Dorsolateral prefrontal cortex (tissue), 120 donors: ENCODE measurements at regions of chr17 and their contacts with region 1.

Region 1: GRCh38 chr17:15260376-15261257 is 4.5 kb downstream of the PMP22 start:
- DNase-seq: peak; percentile 66 to 90 (median 79)
- H3K4me3 ChIP-seq: peak overlapping the region; percentile 49 to 86 (median 75)
- H3K27ac ChIP-seq: peak overlapping the region; percentile 87 to 99 (median 96)
- H3K27me3 ChIP-seq: peaks cover 0 to 7% (median 0%) of the 10 kb centered on the region in 45 donors
- CTCF ChIP-seq: peak; percentile 35 to 97 (median 78)

Region 2: GRCh38 chr17:15143524-15143923 is 117.1 kb before region 1 on chr17:
- intact Hi-C with region 1: no loop called
- DNase-seq: no peak
- H3K4me3 ChIP-seq: no peak overlapping the region
- H3K27ac ChIP-seq: no peak overlapping the region
- H3K27me3 ChIP-seq: peaks cover 0 to 5% (median 0%) of the 10 kb centered on the region in 45 donors
- CTCF ChIP-seq: no peak

Region 3: DNA sequence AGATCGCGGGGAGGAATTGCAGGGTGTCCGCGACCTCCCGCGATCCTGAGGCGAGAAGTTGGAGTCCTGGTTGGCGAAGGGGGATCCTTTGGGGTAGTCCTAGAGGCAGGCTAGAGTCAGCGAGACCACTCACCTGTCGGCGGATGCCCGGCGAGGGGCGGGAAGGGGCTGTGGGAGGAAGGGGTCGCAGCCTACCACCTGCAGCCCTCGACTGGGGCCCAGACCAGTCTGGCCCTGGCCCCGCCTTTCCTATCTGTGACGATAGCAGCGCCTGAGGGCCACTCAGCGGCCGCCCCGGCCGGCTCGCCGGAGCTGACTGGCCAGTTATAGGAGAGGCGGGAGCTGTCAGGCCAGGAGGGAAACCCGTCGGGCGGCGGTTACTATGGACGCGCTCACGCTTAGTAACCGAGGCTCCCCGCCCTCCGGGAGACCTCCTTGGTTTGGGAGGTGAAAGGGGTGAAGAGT is 80.8 kb after region 1 on chr17 and contains the start of gene TEKT3:
- intact Hi-C with region 1: loop called in 1 of 2 experiments (anchors 5 kb)
- DNase-seq: peak; percentile 45 to 89 (median 77)
- H3K4me3 ChIP-seq: peak within 1 kb of the TSS; percentile 33 to 81 (median 62)
- H3K27ac ChIP-seq: peak within 1 kb of the TSS in 2 of 59 donors; percentile 15 to 58
- H3K27me3 ChIP-seq: peaks cover 0 to 23% (median 0%) of the 10 kb centered on the region in 45 donors
- CTCF ChIP-seq: peak in 3 of 56 donors; percentile 11 to 18 (median 14)
- total RNA-seq, gene TEKT3: 0.44 to 7.4 (median 2.7) TPM in 116 of 120 experiments, not detected in the others

Region 4: DNA sequence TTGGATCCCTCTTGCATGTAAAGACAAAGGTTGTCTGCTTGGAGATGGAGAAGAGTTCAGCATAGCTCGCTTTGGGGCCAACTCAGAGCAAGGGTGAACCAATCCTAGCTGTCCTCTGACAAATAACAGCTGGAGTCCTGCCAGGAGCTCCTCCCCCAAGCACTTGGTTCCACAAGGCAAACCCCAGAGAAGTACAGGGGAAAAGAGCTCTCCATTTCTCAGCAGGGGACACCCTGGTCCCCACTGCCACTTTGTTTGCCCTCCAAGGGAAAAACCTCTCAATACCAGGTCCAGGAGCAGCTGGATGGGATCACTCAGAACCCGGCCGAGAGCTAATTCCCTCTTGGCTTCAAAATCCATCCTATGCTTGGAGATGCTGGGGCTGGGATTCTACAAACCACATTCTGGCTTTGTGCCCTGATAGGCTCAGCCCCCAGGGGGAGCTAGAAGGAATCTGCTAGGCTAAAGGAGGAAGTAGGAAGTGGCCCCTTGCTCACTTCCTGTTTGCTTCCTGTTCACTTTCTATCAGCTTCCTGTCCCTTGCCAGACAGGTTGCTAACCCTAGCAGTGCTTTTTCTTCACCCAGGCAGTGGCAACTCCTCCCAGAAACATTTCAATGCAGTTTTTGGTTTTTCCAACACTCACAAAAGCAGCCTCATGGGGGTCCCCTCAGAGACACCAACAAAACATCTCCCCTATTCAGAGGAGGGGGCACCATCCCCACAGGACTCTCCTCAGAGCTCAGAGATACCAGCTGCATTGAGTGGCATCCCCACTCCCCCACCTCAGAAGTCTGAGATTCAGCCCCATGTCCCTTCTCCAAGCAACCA is 176.1 kb after region 1 on chr17:
- intact Hi-C with region 1: loop called in 1 of 2 experiments (anchors 5 kb)
- DNase-seq: peak in 7 of 10 donors; percentile 47 to 79 (median 56)
- H3K4me3 ChIP-seq: peak overlapping the region in 3 of 59 donors; percentile 2 to 32 (median 14)
- H3K27ac ChIP-seq: peak overlapping the region in 54 of 59 donors; percentile 12 to 90 (median 73)
- H3K27me3 ChIP-seq: no peaks in the 10 kb centered on the region
- CTCF ChIP-seq: peak in 51 of 56 donors; percentile 8 to 64 (median 43)

Region 5: DNA sequence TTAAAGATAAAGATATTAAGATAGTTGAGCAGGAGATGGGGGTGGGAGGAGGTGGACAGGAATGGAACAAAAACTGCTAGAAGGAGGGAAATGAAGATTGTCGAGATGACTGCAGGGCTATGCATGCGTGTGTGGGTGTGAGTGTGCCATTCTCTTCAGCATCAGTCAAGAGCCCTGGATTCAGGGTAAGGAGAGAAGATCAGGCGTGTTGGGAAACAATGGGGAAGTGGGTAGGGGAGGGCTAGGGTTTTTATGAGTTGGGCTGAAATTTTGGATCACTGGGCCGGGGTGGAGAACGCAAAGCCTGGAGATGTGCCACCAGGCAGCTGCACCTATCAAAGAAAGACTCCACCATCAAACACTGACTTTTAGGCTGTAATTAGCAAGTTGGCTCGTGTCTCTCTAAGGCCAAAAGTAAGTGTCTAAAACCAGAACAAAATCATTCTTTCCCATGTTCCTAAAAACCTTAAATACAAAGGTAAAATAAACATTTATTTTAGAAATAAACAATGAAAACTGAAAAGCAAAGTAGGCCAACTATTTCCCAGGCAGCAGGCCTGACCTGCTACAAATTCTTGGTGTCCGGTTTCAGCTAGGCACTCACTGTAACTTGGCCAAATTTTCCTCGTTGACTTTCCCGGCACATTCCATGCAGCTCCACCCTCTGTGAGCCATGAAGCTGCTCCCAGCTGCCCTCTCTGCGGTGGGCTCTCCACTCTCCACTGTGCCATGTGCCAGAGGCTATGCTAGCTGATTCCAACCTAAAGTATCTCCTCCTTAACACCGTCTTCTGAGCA is 202.6 kb after region 1 on chr17:
- intact Hi-C with region 1: loop called in 1 of 2 experiments (anchors 5 kb)
- DNase-seq: no peak
- H3K4me3 ChIP-seq: no peak overlapping the region
- H3K27ac ChIP-seq: peak overlapping the region in 34 of 59 donors; percentile 1 to 69 (median 38)
- H3K27me3 ChIP-seq: no peaks in the 10 kb centered on the region
- CTCF ChIP-seq: no peak